T-cell (primary cell): ENCODE measurements at regions of chr4 and their contacts with region 1.

Region 1: GRCh38 chr4:69156913-69157312 is 57.6 kb downstream of the UGT2B11 start:
- DNase-seq: no peak
- ATAC-seq: no peak
- H3K4me3 ChIP-seq: no peak overlapping the region
- H3K4me3 Mint-ChIP-seq: no peak overlapping the region
- H3K27ac ChIP-seq: no peak overlapping the region
- H3K27ac Mint-ChIP-seq: no peak overlapping the region
- H3K4me1 ChIP-seq: no peaks in the 10 kb centered on the region
- H3K4me1 Mint-ChIP-seq: no peaks in the 10 kb centered on the region
- H3K27me3 ChIP-seq: no peaks in the 10 kb centered on the region
- H3K27me3 Mint-ChIP-seq: no peaks in the 10 kb centered on the region

Region 2: DNA sequence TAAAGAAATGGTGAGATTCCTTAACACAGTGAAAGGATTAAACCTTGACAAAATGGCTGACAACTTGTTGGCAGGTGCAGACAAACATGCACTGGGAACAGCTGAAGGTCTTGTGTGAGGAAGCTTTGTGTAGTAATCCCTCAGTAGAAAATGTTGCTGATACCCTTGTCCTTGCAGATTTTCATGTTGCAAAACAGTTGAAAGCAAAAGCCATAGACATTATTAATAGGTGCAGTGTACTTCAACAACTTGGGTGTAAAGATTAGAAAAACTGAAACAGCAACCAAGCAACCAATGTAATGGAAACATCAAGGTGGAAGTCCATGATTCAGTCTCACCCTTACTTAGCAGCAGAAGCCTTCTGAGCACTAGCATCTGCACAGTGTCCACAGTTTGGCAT is 30.9 kb before region 1 on chr4:
- CTCF ChIA-PET with region 1: no interaction called
- POLR2A ChIA-PET with region 1: interaction called in 1 of 2 experiments, 13 read pairs
- DNase-seq: no peak
- ATAC-seq: no peak
- H3K4me3 ChIP-seq: no peak overlapping the region
- H3K4me3 Mint-ChIP-seq: no peak overlapping the region
- H3K27ac ChIP-seq: no peak overlapping the region
- H3K27ac Mint-ChIP-seq: no peak overlapping the region
- H3K4me1 ChIP-seq: no peaks in the 10 kb centered on the region
- H3K4me1 Mint-ChIP-seq: no peaks in the 10 kb centered on the region
- H3K27me3 ChIP-seq: no peaks in the 10 kb centered on the region
- H3K27me3 Mint-ChIP-seq: no peaks in the 10 kb centered on the region